ENCODE measurements at regions of chr15 and their contacts with region 1.

Region 1: DNA sequence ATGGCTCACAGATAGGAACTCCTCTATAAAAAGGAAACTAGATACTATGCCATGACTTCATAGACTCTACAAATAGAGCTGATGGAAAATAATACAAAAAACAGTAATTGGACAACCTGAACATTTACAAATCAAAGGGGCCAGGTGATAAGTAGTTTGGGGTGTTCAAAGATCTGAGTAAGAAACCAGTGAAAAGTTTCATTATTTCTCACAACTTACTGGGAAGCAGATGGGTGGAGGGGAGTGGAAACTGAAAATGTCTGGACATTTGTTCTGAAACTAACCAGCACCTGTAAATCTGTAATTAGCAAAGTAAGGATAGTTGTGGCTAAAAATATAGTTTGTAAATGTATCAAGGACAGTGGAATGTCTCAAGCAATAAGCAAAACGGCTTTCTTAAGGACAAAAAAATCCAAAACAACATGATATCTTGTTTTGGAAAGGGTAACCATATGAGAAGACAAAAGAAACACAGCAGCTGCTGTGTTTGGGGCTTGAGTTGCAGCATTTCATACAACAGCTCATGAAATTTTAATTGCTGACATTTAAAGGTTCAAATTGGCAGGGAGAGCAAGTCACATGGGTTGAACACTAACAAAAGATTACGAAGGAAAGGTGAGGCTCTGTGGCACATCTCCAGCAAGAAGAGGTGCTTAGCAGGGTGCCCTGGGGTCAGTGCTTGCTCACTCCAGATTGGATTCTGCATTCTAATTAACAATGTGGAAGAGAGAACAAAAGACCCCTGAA is 26.8 kb upstream of the THBS1 start:
- DNase-seq: no peak
- H3K4me3 ChIP-seq: no peak overlapping the region
- H3K27ac ChIP-seq: no peak overlapping the region
- H3K27me3 ChIP-seq: no peaks in the 10 kb centered on the region
- CTCF ChIP-seq: no peak

Region 2: GRCh38 chr15:37574985-37575384 is 1979.1 kb before region 1 on chr15:
- intact Hi-C with region 1: no loop called
- DNase-seq: no peak
- H3K4me3 ChIP-seq: no peak overlapping the region
- H3K27ac ChIP-seq: no peak overlapping the region
- H3K27me3 ChIP-seq: peaks cover 0 to 8% (median 0%) of the 10 kb centered on the region in 45 donors
- CTCF ChIP-seq: no peak

Region 3: GRCh38 chr15:39573844-39574243 is 19.7 kb after region 1 on chr15:
- intact Hi-C with region 1: loop called in 1 of 2 experiments (anchors 2 kb)
- DNase-seq: no peak
- H3K4me3 ChIP-seq: no peak overlapping the region
- H3K27ac ChIP-seq: no peak overlapping the region
- H3K27me3 ChIP-seq: peaks cover 0 to 50% (median 5%) of the 10 kb centered on the region in 45 donors
- CTCF ChIP-seq: no peak